Activated T-helper 2 cell treated with anti-CD3 and anti-CD28 coated beads, Interferon-gamma antibody, Interleukin-2, Interleukin-4, amounts not matched to agents 10 μg/mL and 5 μg/mL and 100 μg/mL, durations not matched to agents 14 hours and 24 hours and 36 hours (primary cell): ENCODE measurements at regions of chr7 and their contacts with region 1.

Region 1: GRCh38 chr7:37352974-37353948 is 95.4 kb downstream of the ELMO1 start:
- DNase-seq: peak; percentile 71
- H3K4me3 Mint-ChIP-seq: peak overlapping the region; percentile 90
- H3K27ac Mint-ChIP-seq: peak overlapping the region; percentile 84
- H3K4me1 Mint-ChIP-seq: peaks cover 72% of the 10 kb centered on the region
- H3K27me3 Mint-ChIP-seq: no peaks in the 10 kb centered on the region

Region 2: DNA sequence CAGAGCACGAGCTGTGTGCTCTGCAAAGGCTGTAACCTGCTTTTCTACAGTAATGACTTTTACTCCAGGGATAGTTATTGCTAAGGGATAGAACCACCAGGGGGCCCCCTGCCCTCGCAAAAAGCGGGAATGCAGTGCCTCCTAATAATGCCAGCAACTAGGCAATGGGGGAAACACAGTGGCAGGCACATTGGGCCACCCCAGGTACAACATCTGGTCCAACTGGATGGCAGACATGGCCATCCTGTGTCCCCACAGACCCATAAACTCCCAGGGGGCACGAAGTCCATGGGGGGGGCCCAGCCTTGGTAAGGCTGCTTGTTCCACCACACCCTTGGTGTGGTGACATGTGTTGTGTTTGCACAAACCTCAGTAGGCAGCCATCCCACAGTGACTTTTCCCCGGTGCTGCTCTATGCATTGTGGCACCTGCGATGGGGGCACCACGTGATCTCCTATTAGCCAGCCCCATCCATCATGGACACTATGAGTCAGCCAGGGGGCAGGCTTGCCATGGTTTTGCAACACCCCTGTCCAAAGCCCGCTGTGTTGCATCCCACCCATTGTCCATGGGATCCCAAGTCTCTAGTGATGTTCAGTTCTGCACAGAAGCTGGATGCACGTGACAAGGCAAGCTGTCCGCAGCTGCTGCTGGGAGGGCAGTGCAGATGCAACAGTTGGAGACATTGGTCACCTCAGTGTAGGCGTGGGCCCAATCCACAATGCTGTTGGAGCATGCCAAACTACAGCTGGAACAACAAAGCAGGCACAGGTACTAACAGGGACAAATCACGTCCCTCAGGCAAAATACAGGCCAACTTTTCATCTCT is 879.6 kb before region 1 on chr7:
- intact Hi-C with region 1: loop called (anchors 10 kb)
- DNase-seq: peak; percentile 24
- H3K4me3 Mint-ChIP-seq: no peak overlapping the region
- H3K27ac Mint-ChIP-seq: no peak overlapping the region
- H3K4me1 Mint-ChIP-seq: peaks cover 17% of the 10 kb centered on the region
- H3K27me3 Mint-ChIP-seq: no peaks in the 10 kb centered on the region

Region 3: DNA sequence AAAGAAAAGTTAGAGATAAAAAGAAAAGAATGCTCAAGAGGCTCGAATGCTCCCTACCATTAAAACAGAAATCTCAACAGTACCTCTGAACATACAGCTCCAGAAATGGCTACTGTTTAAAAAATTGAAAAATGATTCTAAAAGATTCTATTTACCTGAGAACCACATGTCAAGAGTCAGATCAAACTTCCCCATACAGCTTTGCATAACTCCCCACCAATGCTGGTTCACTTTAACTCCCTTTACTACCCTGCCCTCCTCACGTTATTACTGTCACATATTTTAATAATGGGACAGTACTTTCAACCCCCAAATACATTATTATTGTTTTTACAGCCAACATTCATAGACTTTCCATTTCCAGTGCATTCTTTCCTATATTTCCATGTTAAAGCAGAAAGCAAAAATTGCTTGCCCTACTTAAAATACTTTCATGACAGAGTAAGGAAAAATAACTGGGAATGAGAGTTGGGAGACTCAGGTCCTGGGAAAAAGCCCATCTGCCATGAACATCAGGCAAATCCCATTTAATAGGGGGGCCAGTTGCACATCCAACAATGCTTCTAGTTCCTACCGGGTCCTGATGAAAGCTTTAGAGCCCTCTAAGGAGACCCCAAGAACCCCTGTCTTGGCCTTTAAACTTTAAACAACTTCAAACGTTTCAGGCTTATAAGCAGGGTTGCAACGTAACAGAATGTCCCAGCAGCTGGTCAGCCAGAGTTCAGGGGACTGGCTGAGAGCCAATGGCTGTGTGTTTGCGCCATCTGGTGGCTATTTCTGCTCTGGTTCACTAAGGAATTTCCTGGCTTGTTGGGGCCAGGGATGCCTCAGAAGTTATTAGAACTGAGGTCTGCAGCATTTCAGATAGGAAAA is 152.0 kb before region 1 on chr7:
- intact Hi-C with region 1: no loop called
- DNase-seq: peak; percentile 21
- H3K4me3 Mint-ChIP-seq: no peak overlapping the region
- H3K27ac Mint-ChIP-seq: no peak overlapping the region
- H3K4me1 Mint-ChIP-seq: peaks cover 13% of the 10 kb centered on the region
- H3K27me3 Mint-ChIP-seq: no peaks in the 10 kb centered on the region

Region 4: GRCh38 chr7:37234928-37235327 is 118.3 kb before region 1 on chr7:
- intact Hi-C with region 1: loop called (anchors 1 kb)
- DNase-seq: no peak
- H3K4me3 Mint-ChIP-seq: no peak overlapping the region
- H3K27ac Mint-ChIP-seq: no peak overlapping the region
- H3K4me1 Mint-ChIP-seq: peaks cover 14% of the 10 kb centered on the region
- H3K27me3 Mint-ChIP-seq: no peaks in the 10 kb centered on the region

Region 5: DNA sequence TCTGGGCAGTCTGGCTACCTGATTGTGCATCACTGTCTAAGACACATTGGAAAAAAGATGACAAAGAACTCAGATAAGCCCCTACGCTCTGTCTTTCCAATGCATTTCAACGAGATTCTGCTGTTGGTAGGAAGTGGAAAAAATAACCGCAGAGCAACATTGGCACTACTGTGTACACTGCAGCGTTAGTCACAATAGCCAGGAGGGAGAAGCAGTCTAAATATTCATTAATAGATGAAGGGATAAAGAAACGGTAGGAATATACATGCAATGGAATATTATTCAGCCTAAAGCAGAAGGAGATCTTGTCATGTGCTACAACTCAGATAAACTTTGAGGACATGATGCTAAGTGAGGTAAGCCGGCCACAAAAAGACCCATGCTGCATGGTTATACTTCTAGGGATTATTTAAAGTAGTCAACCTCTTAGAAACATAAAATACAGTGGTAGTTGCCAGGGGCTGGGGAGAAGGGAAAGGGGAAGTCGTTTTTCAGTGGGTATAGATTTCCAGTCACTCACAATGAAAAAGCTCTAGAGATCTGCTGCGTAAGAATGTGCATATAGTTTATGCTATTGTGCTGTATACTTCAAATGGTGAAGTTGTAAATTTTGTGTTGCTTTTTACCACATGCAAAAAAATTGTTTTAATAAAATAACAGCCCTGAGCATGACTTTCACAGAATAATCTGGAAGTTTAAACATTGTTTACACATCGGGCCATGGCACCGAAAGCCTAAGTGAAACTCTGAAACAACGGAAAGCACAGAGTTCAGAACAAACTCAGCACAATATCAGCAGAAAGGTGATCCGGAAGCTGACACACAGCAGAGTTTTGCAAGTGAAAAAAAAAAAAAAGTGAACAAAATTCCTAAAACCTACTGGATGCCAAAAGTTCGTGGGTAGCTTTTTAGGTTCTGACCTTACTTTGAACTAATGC is 55.3 kb after region 1 on chr7:
- intact Hi-C with region 1: loop called (anchors 1 kb)
- DNase-seq: no peak
- H3K4me3 Mint-ChIP-seq: peak overlapping the region; percentile 80
- H3K27ac Mint-ChIP-seq: peak overlapping the region; percentile 90
- H3K4me1 Mint-ChIP-seq: peaks cover 55% of the 10 kb centered on the region
- H3K27me3 Mint-ChIP-seq: no peaks in the 10 kb centered on the region

Region 6: GRCh38 chr7:37448636-37449361 is 95.5 kb after region 1 on chr7 and contains the start of gene ELMO1:
- intact Hi-C with region 1: loop called (anchors 1 kb)
- DNase-seq: peak; percentile 79
- H3K4me3 Mint-ChIP-seq: peak within 1 kb of the TSS; percentile 97
- H3K27ac Mint-ChIP-seq: peak within 1 kb of the TSS; percentile 98
- H3K4me1 Mint-ChIP-seq: peaks cover 32% of the 10 kb centered on the region
- H3K27me3 Mint-ChIP-seq: peaks cover 13% of the 10 kb centered on the region
- total RNA-seq, gene ELMO1: 112 and 117 TPM in 2 replicates